Aorta (tissue), 5 donors: ENCODE measurements at regions of chr11 and their contacts with region 1.

Region 1: GRCh38 chr11:45252134-45252855 is 33.8 kb downstream of the SYT13 start:
- DNase-seq: peak; percentile 54 to 84
- ATAC-seq: peak; percentile 64
- H3K4me3 ChIP-seq: no peak overlapping the region
- H3K27ac ChIP-seq: no peak overlapping the region
- H3K4me1 ChIP-seq: no peaks in the 10 kb centered on the region
- H3K27me3 ChIP-seq: no peaks in the 10 kb centered on the region

Region 2: DNA sequence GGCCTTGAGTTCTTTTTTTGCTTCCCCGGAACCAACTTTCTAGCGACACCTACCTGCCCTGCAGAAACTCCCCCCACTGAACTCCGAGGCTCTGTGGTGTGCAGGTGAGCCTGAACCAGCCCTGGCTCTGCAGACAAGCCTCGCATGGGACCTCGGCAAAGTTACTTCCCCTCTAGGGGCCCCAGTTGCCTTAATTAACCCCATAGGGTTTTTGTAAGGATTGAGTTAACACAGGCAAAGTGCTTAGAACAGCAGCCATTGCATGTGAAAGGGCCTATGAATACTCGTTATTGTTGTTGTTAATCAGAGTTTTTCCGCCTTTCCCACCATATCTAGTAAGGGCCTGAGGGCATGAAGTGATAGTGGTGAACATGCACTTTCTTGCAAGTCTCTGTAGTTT is 46.4 kb after region 1 on chr11:
- intact Hi-C with region 1: loop called in 1 of 2 experiments (anchors 5 kb)
- DNase-seq: no peak
- ATAC-seq: no peak
- H3K4me3 ChIP-seq: no peak overlapping the region
- H3K27ac ChIP-seq: no peak overlapping the region
- H3K4me1 ChIP-seq: no peaks in the 10 kb centered on the region
- H3K27me3 ChIP-seq: no peaks in the 10 kb centered on the region

Region 3: DNA sequence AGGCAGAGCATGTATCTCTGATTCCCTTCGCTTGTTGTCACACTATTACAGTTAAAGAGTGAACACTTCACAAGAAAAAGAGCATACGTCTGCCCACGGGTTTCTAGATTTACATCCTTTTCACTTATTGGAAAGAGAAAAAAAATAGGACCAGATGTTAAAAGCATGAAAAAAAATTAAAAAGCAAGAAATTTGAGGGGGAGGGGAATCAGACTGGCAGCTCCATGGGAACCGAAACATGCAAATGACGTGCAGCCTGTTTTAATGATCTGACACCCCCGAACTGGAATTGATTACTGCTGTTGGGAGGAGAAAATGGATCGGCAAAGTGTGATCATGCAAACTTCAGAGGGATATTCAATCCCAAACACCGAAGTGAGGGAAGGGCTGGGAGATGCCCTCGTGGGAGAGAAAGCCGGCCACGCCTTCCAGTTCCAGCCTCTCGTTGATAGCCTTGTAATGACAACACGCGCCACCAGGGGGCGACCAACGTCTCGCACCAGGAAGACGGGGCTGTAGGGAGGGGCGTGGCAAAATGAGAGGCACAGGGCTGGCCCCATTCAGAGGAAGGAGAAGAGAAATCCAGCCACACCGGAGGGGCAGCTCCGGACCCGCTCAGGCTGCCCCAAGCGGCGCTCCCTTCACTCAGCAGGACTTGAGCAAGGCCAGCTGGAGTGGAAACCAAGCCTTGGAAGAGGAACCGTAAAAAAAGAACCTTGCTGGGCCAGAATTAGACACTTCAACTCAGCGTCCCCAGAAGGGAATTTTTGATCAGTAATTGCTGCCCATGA is 87.6 kb after region 1 on chr11:
- intact Hi-C with region 1: loop called in 1 of 2 experiments (anchors 10 kb)
- DNase-seq: peak; percentile 97 to 99
- ATAC-seq: peak; percentile 94
- H3K4me3 ChIP-seq: no peak overlapping the region
- H3K27ac ChIP-seq: no peak overlapping the region
- H3K4me1 ChIP-seq: no peaks in the 10 kb centered on the region
- H3K27me3 ChIP-seq: no peaks in the 10 kb centered on the region